Activated naive CD4-positive, alpha-beta T cell treated with anti-CD3 and anti-CD28 coated beads for 36 hours (primary cell): ENCODE measurements at regions of chr3 and their contacts with region 1.

Region 1: GRCh38 chr3:71725279-71725991 is at the start of gene EIF4E3:
- DNase-seq: peak; percentile 31
- H3K4me3 Mint-ChIP-seq: peak within 1 kb of the TSS; percentile 90
- H3K27ac Mint-ChIP-seq: peak within 1 kb of the TSS; percentile 91
- H3K4me1 Mint-ChIP-seq: peaks cover 59% of the 10 kb centered on the region
- H3K27me3 Mint-ChIP-seq: no peaks in the 10 kb centered on the region
- total RNA-seq, gene EIF4E3: 25.2 to 26.2 TPM

Region 2: GRCh38 chr3:71416876-71417275 is 308.6 kb before region 1 on chr3:
- CTCF ChIA-PET with region 1: no interaction called
- intact Hi-C with region 1: no loop called
- DNase-seq: peak; percentile 76
- H3K4me3 Mint-ChIP-seq: peak overlapping the region; percentile 69
- H3K27ac Mint-ChIP-seq: peak overlapping the region; percentile 39
- H3K4me1 Mint-ChIP-seq: peaks cover 89% of the 10 kb centered on the region
- H3K27me3 Mint-ChIP-seq: no peaks in the 10 kb centered on the region

Region 3: DNA sequence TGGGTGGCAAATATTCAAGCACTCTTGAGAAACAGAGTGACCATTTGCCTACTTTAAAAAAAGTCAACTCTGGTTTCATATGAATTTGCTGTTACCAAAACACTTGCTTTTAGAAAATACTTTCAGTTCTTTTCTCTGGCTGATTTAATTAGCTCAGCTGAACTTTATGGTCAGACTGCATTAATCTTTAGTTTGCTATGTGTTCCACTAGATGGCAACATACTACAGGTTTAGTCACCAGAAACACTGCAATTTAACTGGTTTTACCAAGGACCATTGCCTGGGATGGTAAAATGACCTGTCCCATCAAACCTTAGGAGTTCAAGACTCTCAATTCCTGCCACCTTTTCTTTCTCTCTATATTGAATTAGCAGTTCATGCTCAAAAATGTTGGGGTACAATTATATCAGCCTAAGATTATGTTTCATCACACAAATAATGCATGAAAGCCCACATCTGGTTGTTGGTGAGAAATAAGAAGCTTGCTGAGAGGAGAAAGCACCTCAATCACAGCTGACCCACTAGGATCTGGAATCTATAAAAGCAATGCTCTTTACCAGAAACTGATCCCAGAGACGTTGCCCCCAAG is 14.4 kb before region 1 on chr3:
- CTCF ChIA-PET with region 1: interaction called, 48 read pairs
- intact Hi-C with region 1: loop called (anchors 1 kb)
- DNase-seq: no peak
- H3K4me3 Mint-ChIP-seq: no peak overlapping the region
- H3K27ac Mint-ChIP-seq: no peak overlapping the region
- H3K4me1 Mint-ChIP-seq: peaks cover 50% of the 10 kb centered on the region
- H3K27me3 Mint-ChIP-seq: no peaks in the 10 kb centered on the region

Region 4: DNA sequence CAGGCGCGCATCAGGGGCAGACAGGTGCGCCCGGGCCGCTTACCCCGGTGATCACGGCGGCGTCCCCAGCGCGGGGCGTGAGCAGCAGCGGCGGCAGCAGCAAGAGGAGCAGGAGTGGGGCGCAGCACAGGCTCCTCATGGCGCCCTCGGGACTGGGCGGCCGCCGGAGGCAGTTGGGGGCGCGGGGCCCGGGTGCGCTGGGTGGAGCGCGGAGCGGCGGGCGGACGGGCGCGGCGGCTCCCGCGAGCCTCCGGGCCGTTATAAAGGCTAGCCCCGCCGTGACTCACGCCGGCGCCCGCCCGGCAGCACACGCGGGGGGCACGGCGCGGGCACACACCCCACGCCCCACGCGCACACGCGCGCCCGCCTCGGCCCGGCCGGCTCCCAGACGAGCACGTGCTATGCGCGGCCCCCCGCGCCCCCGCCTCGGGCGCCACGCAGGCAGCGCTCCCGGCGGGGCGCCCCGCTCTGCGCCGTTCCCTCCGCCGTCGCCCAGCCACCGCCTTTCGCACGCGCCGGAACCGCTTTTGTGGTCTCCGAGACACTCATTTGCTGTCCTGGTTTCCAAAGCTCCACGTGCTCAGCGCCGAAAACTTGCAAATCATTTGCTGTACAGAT is 59.6 kb after region 1 on chr3 and contains the start of gene PROK2:
- CTCF ChIA-PET with region 1: interaction called, 6 read pairs
- intact Hi-C with region 1: loop called (anchors 5 kb)
- DNase-seq: peak; percentile 63
- H3K4me3 Mint-ChIP-seq: peak within 1 kb of the TSS; percentile 73
- H3K27ac Mint-ChIP-seq: peak within 1 kb of the TSS; percentile 1
- H3K4me1 Mint-ChIP-seq: peaks cover 16% of the 10 kb centered on the region
- H3K27me3 Mint-ChIP-seq: peaks cover 47% of the 10 kb centered on the region
- total RNA-seq, gene PROK2: 0.15 TPM in 1 of 2 experiments, not detected in the other

Region 5: GRCh38 chr3:71978150-71978721 is 252.8 kb after region 1 on chr3:
- CTCF ChIA-PET with region 1: no interaction called
- intact Hi-C with region 1: loop called (anchors 2 kb)
- DNase-seq: peak; percentile 76
- H3K4me3 Mint-ChIP-seq: no peak overlapping the region
- H3K27ac Mint-ChIP-seq: peak overlapping the region; percentile 82
- H3K4me1 Mint-ChIP-seq: peaks cover 33% of the 10 kb centered on the region
- H3K27me3 Mint-ChIP-seq: peaks cover 18% of the 10 kb centered on the region

Region 6: GRCh38 chr3:72339116-72340030 is 613.9 kb after region 1 on chr3:
- CTCF ChIA-PET with region 1: no interaction called
- intact Hi-C with region 1: loop called (anchors 5 kb)
- DNase-seq: no peak
- H3K4me3 Mint-ChIP-seq: no peak overlapping the region
- H3K27ac Mint-ChIP-seq: no peak overlapping the region
- H3K4me1 Mint-ChIP-seq: peaks cover 36% of the 10 kb centered on the region
- H3K27me3 Mint-ChIP-seq: no peaks in the 10 kb centered on the region

Region 7: DNA sequence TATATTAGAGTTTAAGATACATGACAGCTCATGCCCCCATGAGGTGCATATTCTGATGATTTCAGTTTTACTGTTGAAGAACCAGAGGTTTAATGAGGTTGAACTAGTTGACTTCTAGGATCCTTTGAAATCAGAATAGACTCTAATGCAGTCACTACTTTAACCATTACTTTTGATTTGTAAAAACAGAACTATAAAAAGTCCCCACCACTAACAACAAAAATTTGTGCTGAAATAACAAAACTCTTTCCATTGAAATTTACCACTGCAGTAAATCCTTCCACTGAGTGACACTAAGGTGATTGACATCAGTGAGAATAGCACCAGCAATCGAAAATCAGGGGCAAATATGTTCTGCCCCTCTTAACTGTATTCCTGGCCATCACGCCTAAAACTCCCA is 908.7 kb after region 1 on chr3:
- CTCF ChIA-PET with region 1: no interaction called
- intact Hi-C with region 1: loop called (anchors 5 kb)
- DNase-seq: peak; percentile 19
- H3K4me3 Mint-ChIP-seq: no peak overlapping the region
- H3K27ac Mint-ChIP-seq: no peak overlapping the region
- H3K4me1 Mint-ChIP-seq: peaks cover 39% of the 10 kb centered on the region
- H3K27me3 Mint-ChIP-seq: peaks cover 10% of the 10 kb centered on the region

Region 8: DNA sequence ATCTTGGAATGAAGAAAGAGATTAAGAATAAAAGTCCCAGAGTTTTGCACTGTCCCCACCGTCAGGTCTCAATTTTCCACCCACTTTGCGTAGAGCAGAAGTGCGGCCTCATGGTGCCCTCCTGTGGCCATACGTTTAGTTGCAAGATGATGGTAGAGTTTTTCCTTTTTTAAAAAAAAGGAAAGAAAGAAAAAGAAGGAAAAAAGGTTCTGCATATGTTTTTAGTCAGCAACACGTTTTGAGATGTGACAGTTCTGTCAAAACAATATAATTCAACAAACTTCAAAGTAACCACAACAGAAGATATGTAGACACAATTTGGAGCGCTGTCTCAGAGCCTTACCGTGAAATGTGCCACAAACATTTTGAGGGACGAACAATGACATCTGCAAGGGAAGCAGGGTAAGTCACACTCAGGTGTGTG is 1360.6 kb after region 1 on chr3:
- CTCF ChIA-PET with region 1: interaction called, 3 read pairs
- intact Hi-C with region 1: loop called (anchors 5 kb)
- DNase-seq: peak; percentile 69
- H3K4me3 Mint-ChIP-seq: no peak overlapping the region
- H3K27ac Mint-ChIP-seq: no peak overlapping the region
- H3K4me1 Mint-ChIP-seq: peaks cover 8% of the 10 kb centered on the region
- H3K27me3 Mint-ChIP-seq: no peaks in the 10 kb centered on the region